GM10248 (cell line): ENCODE measurements at regions of chr7 and their contacts with region 1.

Region 1: GRCh38 chr7:87416682-87417587 is 58.5 kb downstream of the ABCB4 start:
- DNase-seq: peak; percentile 42
- CTCF ChIP-seq: peak; percentile 69

Region 2: DNA sequence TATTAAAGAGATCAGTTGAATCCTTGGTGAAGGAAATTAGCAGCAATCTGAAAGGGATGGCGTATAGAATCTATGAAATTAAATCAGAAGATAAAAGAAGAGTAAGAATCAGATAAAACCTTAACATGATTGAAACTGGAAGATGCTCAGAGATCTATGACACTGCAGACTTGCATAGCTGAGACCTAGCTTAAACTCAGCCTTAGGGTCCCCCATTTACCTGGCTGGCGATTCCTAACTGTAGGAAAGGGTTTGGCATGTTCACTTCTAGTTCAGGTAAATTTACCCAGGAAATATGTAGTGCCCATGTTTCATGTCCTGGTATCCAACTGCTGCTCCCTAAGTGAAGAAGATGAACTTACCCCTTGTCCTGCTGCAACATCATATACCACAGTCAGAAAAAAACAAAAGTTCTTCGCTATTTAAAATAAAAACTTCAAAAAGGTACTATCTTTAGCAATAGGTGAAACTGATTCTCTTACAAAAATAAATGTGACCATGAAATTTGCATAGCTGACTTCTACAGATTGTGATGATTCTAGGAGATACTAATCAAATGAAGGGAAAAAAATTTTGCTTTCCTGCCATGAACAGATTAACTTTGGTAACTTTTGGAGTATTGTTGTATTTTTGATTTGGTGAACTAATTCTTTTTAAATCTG is 149.6 kb before region 1 on chr7:
- CTCF ChIA-PET with region 1: no interaction called
- POLR2A ChIA-PET with region 1: no interaction called
- DNase-seq: no peak
- CTCF ChIP-seq: no peak

Region 3: GRCh38 chr7:87312215-87312865 is 104.6 kb before region 1 on chr7:
- CTCF ChIA-PET with region 1: interaction called, 281 read pairs
- POLR2A ChIA-PET with region 1: no interaction called
- DNase-seq: peak; percentile 62
- CTCF ChIP-seq: peak; percentile 98

Region 4: DNA sequence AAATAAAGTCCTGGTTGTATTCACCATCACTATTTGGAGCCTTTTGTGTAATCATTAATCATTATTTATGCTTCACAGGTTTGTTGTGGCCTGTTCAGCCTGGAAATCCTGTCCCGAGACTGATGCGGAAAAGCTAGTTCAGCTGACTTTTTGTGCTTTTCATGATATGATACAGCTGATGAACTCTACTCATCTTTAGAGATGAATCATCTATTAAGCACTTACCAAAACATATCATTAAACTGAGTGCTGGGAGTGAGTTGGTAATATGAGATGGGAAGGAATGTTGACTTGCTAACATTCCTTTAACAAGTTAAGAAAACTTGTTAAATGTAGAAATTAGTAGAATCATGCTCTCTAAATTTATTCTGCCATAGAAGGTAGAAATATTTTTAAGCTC is 18.5 kb before region 1 on chr7:
- CTCF ChIA-PET with region 1: interaction called, 82 read pairs
- POLR2A ChIA-PET with region 1: no interaction called
- DNase-seq: no peak
- CTCF ChIP-seq: no peak

Region 5: GRCh38 chr7:87404674-87405073 is 12.3 kb before region 1 on chr7:
- CTCF ChIA-PET with region 1: interaction called, 82 read pairs
- POLR2A ChIA-PET with region 1: no interaction called
- DNase-seq: no peak
- CTCF ChIP-seq: no peak

Region 6: GRCh38 chr7:87435546-87435945 is 18.6 kb after region 1 on chr7:
- CTCF ChIA-PET with region 1: interaction called, 23 read pairs
- POLR2A ChIA-PET with region 1: interaction called, 3 read pairs
- DNase-seq: no peak
- CTCF ChIP-seq: no peak